HEK293 (cell line): ENCODE measurements at regions of chr19 and their contacts with region 1.

Region 1: GRCh38 chr19:35495107-35496064 is 5.1 kb upstream of the KRTDAP start:
- H3K4me3 ChIP-seq: no peak overlapping the region
- H3K27ac ChIP-seq: no peak overlapping the region
- H3K4me1 ChIP-seq: no peaks in the 10 kb centered on the region
- CTCF ChIP-seq: peak; percentile 99

Region 2: DNA sequence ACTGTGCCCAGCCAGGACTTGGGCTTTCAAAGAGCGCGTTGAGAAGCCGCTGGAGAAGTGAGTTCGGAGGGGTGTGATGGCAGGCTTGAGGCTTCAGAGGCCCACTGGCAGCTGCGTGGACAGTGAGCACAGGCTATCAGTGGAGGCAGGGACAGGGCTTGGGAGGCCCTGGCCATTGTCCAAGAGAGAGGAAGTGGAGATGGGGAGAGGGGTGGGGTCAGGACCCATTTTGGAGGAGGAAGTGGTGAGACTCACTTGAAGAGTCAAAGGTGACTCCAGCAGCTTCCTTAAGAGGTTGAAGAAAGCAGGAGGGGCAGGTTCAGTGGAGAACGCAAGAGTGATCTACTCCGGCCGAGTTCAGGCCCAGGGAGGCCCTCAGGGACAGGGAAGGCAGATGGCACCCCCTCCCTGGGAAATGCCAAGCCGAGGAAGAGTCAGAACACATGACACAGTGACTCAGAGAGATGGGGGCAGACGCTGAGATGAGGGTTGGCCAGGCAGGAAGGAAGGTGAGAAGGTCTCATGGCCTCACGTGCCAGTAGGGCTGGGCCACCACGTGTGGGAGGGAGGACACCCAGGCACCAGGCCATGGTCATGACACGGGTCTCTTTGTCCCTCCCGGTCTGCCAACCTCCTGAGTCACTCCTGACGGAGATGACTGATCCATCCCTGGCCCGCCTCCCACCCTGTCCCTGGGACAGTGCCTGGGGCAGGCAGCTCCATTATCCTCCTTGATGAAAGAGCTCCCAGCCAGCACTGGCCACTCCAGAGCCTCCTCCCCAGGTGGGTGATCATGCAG is 176.5 kb before region 1 on chr19:
- CTCF ChIA-PET with region 1: interaction called, 11 read pairs
- POLR2A ChIA-PET with region 1: no interaction called
- H3K4me3 ChIP-seq: no peak overlapping the region
- H3K27ac ChIP-seq: no peak overlapping the region
- H3K4me1 ChIP-seq: no peaks in the 10 kb centered on the region
- CTCF ChIP-seq: no peak

Region 3: GRCh38 chr19:35340431-35340830 is 155.0 kb before region 1 on chr19:
- CTCF ChIA-PET with region 1: interaction called, 19 read pairs
- POLR2A ChIA-PET with region 1: no interaction called
- H3K4me3 ChIP-seq: no peak overlapping the region
- H3K27ac ChIP-seq: no peak overlapping the region
- H3K4me1 ChIP-seq: no peaks in the 10 kb centered on the region
- CTCF ChIP-seq: no peak

Region 4: GRCh38 chr19:35363001-35363590 is 132.3 kb before region 1 on chr19:
- CTCF ChIA-PET with region 1: interaction called, 237 read pairs
- POLR2A ChIA-PET with region 1: no interaction called
- H3K4me3 ChIP-seq: no peak overlapping the region
- H3K27ac ChIP-seq: no peak overlapping the region
- H3K4me1 ChIP-seq: no peaks in the 10 kb centered on the region
- CTCF ChIP-seq: no peak

Region 5: GRCh38 chr19:35468637-35469036 is 26.7 kb before region 1 on chr19:
- CTCF ChIA-PET with region 1: interaction called, 22 read pairs
- POLR2A ChIA-PET with region 1: no interaction called
- H3K4me3 ChIP-seq: no peak overlapping the region
- H3K27ac ChIP-seq: no peak overlapping the region
- H3K4me1 ChIP-seq: no peaks in the 10 kb centered on the region
- CTCF ChIP-seq: peak; percentile 92

Region 6: GRCh38 chr19:35484252-35485036 is 10.9 kb before region 1 on chr19:
- CTCF ChIA-PET with region 1: interaction called, 63 read pairs
- POLR2A ChIA-PET with region 1: interaction called, 5 read pairs
- H3K4me3 ChIP-seq: no peak overlapping the region
- H3K27ac ChIP-seq: no peak overlapping the region
- H3K4me1 ChIP-seq: peaks cover 8% of the 10 kb centered on the region
- CTCF ChIP-seq: no peak